IMR-90 (cell line): ENCODE measurements at regions of chr11 and their contacts with region 1.

Region 1: GRCh38 chr11:88329563-88330250 is 7.8 kb downstream of the CTSC start:
- DNase-seq: no peak
- ATAC-seq: no peak
- H3K4me3 ChIP-seq: no peak overlapping the region
- H3K27ac ChIP-seq: no peak overlapping the region
- H3K4me1 ChIP-seq: peaks cover 2% of the 10 kb centered on the region; the same call in 1 of the 2 replicates
- H3K27me3 ChIP-seq: no peaks in the 10 kb centered on the region
- CTCF ChIP-seq: no peak
- POLR2A ChIP-seq: no peak
- RAD21 ChIP-seq: no peak

Region 2: GRCh38 chr11:88086297-88086696 is 243.4 kb before region 1 on chr11:
- CTCF ChIA-PET with region 1: no interaction called
- POLR2A ChIA-PET with region 1: interaction called, 19 read pairs
- dilution Hi-C with region 1: no loop called
- in situ Hi-C with region 1: no loop called
- intact Hi-C with region 1: no loop called
- DNase-seq: no peak
- ATAC-seq: no peak
- H3K4me3 ChIP-seq: no peak overlapping the region
- H3K27ac ChIP-seq: no peak overlapping the region
- H3K4me1 ChIP-seq: no peaks in the 10 kb centered on the region
- H3K27me3 ChIP-seq: no peaks in the 10 kb centered on the region
- CTCF ChIP-seq: no peak
- POLR2A ChIP-seq: no peak
- RAD21 ChIP-seq: no peak

Region 3: GRCh38 chr11:88188251-88188931 is 141.3 kb before region 1 on chr11:
- CTCF ChIA-PET with region 1: no interaction called
- POLR2A ChIA-PET with region 1: no interaction called
- dilution Hi-C with region 1: no loop called
- in situ Hi-C with region 1: no loop called
- intact Hi-C with region 1: no loop called
- DNase-seq: no peak
- ATAC-seq: peak; percentile 49
- H3K4me3 ChIP-seq: no peak overlapping the region
- H3K27ac ChIP-seq: no peak overlapping the region
- H3K4me1 ChIP-seq: no peaks in the 10 kb centered on the region
- H3K27me3 ChIP-seq: no peaks in the 10 kb centered on the region
- CTCF ChIP-seq: no peak
- POLR2A ChIP-seq: no peak
- RAD21 ChIP-seq: no peak

Region 4: DNA sequence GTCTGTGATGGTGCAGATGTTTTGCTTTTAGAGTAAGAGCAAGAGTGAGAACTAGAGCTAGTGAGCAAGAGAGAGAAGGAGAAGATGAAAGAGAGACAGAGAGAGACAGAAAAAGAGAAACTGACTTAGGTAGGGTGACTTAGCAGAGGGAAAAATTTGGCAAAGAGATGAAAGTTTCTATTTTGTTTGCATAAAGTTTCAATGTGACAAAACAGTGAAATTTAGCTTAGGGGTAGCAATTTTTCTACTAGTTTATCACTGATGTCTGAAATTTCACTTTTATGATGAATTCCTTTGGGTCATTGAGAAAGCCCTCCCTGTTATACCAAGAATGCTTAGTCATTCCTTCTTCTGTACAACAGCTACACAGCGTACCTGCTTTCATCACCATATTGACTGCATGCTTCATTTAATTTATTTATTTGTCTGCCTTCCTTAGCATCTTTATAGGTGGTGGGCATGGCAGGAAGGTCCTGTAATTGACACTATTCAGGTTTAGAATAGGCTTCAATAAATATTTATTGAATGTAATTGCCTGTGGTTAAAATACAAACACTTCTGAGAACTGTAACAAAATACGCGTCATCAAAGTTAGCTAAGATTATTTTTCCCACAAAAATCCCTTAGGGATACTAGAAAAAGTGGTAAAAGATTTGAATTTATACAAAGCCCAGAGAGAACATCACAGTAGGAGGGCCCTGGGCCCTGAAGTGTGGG is 27.8 kb after region 1 on chr11:
- CTCF ChIA-PET with region 1: no interaction called
- POLR2A ChIA-PET with region 1: no interaction called
- dilution Hi-C with region 1: no loop called
- in situ Hi-C with region 1: no loop called
- intact Hi-C with region 1: no loop called
- DNase-seq: peak; percentile 27
- ATAC-seq: peak; percentile 68
- H3K4me3 ChIP-seq: no peak overlapping the region
- H3K27ac ChIP-seq: no peak overlapping the region; the same call in 1 of the 2 replicates
- H3K4me1 ChIP-seq: peaks cover 3% of the 10 kb centered on the region
- H3K27me3 ChIP-seq: no peaks in the 10 kb centered on the region
- CTCF ChIP-seq: no peak
- POLR2A ChIP-seq: no peak
- RAD21 ChIP-seq: no peak